Activated CD4-positive, alpha-beta memory T cell treated with anti-CD3 and anti-CD28 coated beads for 36 hours (primary cell): ENCODE measurements at regions of chr10 and their contacts with region 1.

Region 1: GRCh38 chr10:125134881-125135642 is 25.3 kb downstream of the CTBP2 start:
- DNase-seq: no peak
- H3K4me3 Mint-ChIP-seq: no peak overlapping the region
- H3K27ac Mint-ChIP-seq: no peak overlapping the region
- H3K4me1 Mint-ChIP-seq: no peaks in the 10 kb centered on the region
- H3K27me3 Mint-ChIP-seq: peaks cover 2% of the 10 kb centered on the region

Region 2: GRCh38 chr10:125158601-125159485 is 23.8 kb after region 1 on chr10:
- CTCF ChIA-PET with region 1: no interaction called
- POLR2A ChIA-PET with region 1: no interaction called
- intact Hi-C with region 1: loop called (anchors 1 kb)
- DNase-seq: no peak
- H3K4me3 Mint-ChIP-seq: peak overlapping the region; percentile 61
- H3K27ac Mint-ChIP-seq: no peak overlapping the region
- H3K4me1 Mint-ChIP-seq: peaks cover 5% of the 10 kb centered on the region
- H3K27me3 Mint-ChIP-seq: peaks cover 50% of the 10 kb centered on the region

Region 3: GRCh38 chr10:125489731-125490130 is 354.7 kb after region 1 on chr10:
- CTCF ChIA-PET with region 1: no interaction called
- POLR2A ChIA-PET with region 1: no interaction called
- intact Hi-C with region 1: no loop called
- DNase-seq: no peak
- H3K4me3 Mint-ChIP-seq: no peak overlapping the region
- H3K27ac Mint-ChIP-seq: no peak overlapping the region
- H3K4me1 Mint-ChIP-seq: no peaks in the 10 kb centered on the region
- H3K27me3 Mint-ChIP-seq: peaks cover 2% of the 10 kb centered on the region